ENCODE measurements at regions of chr7 and their contacts with region 1.

Region 1: DNA sequence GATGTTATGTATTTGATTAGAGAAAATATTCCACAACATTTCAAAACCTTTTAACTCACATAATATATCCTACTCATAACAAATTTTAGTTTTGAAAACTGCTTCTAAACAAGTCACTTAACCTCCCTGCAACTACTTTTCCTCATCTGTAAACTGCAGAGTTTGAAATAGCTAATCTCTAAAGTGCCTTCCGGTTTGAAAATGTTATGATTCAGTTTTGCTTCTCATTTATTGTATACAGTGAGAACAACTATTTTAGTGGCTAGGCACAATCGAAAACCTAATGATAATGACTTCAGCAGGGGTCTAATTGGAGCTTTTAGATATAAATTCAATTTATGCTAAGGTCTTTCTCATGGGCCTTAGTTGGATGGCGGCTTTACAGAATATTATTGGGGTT is 30.7 kb upstream of the TEX47 start:
- DNase-seq: no peak
- H3K4me3 ChIP-seq: no peak overlapping the region
- H3K27ac ChIP-seq: no peak overlapping the region
- H3K4me1 ChIP-seq: no peaks in the 10 kb centered on the region
- H3K27me3 ChIP-seq: no peaks in the 10 kb centered on the region
- CTCF ChIP-seq: no peak

Region 2: DNA sequence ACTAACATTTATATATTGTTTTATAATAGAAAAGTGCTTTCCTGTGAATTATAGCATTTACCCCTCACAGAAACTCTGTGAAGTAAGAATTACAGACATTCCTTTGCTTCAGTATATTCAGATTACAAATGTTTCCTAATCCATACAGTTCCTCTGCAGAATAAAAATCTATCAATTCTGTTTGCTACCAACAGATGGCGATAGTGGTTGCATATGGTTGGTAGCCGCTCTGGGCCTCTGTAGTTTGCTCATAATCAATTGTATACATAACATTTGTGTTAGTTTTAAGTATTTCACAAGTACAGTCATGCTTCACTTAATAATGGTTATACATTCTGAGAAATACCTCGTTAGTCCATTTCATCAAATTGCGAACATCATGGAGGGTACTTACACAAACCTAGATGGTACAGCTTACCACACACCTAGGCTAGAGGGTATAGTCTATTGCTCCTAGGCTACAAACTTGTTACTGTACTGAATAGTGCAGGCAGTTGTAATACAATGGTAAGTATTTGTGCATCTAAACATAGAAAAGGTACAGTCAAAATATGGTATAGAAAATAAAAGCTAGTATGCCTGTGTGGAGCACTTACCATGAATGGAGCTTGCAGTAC is 425.1 kb before region 1 on chr7:
- CTCF ChIA-PET with region 1: no interaction called
- POLR2A ChIA-PET with region 1: no interaction called
- intact Hi-C with region 1: no loop called
- DNase-seq: no peak
- H3K4me3 ChIP-seq: no peak overlapping the region
- H3K27ac ChIP-seq: no peak overlapping the region
- H3K4me1 ChIP-seq: no peaks in the 10 kb centered on the region
- H3K27me3 ChIP-seq: no peaks in the 10 kb centered on the region
- CTCF ChIP-seq: peak; percentile 76

Region 3: GRCh38 chr7:89023877-89024276 is 197.7 kb after region 1 on chr7:
- CTCF ChIA-PET with region 1: no interaction called
- POLR2A ChIA-PET with region 1: interaction called, 10 read pairs
- intact Hi-C with region 1: no loop called
- DNase-seq: no peak
- H3K4me3 ChIP-seq: no peak overlapping the region
- H3K27ac ChIP-seq: no peak overlapping the region
- H3K4me1 ChIP-seq: no peaks in the 10 kb centered on the region; the same call in 1 of the 2 replicates
- H3K27me3 ChIP-seq: no peaks in the 10 kb centered on the region
- CTCF ChIP-seq: no peak

Measured in PC-9 (cell line).